Mammary epithelial cell (primary cell): ENCODE measurements at regions of chr17 and their contacts with region 1.

Region 1: GRCh38 chr17:50638851-50639767 is 4.4 kb downstream of the ABCC3 start:
- DNase-seq: peak; percentile 97
- H3K4me3 ChIP-seq: peak overlapping the region in 1 of 3 experiments; percentile 14
- H3K27ac ChIP-seq: peak overlapping the region; percentile 55
- H3K4me1 ChIP-seq: peaks cover 82% of the 10 kb centered on the region
- H3K27me3 ChIP-seq: no peaks in the 10 kb centered on the region
- CTCF ChIP-seq: no peak

Region 2: GRCh38 chr17:50541716-50542688 is 97.1 kb before region 1 on chr17:
- CTCF ChIA-PET with region 1: interaction called, 17 read pairs
- dilution Hi-C with region 1: no loop called
- in situ Hi-C with region 1: loop called in 1 of 2 experiments (anchors 5 kb)
- intact Hi-C with region 1: no loop called
- DNase-seq: peak; percentile 82
- H3K4me3 ChIP-seq: peak overlapping the region in 2 of 3 experiments; percentile 16 to 28
- H3K27ac ChIP-seq: no peak overlapping the region
- H3K4me1 ChIP-seq: peaks cover 60% of the 10 kb centered on the region
- H3K27me3 ChIP-seq: no peaks in the 10 kb centered on the region
- CTCF ChIP-seq: peak in 1 of 2 donors; percentile 12

Region 3: GRCh38 chr17:50649042-50649904 is 10.2 kb after region 1 on chr17:
- CTCF ChIA-PET with region 1: no interaction called
- dilution Hi-C with region 1: no loop called
- in situ Hi-C with region 1: no loop called
- intact Hi-C with region 1: no loop called
- DNase-seq: no peak
- H3K4me3 ChIP-seq: no peak overlapping the region
- H3K27ac ChIP-seq: no peak overlapping the region
- H3K4me1 ChIP-seq: no peaks in the 10 kb centered on the region
- H3K27me3 ChIP-seq: no peaks in the 10 kb centered on the region
- CTCF ChIP-seq: no peak

Region 4: GRCh38 chr17:50661795-50662391 is 22.8 kb after region 1 on chr17:
- CTCF ChIA-PET with region 1: interaction called, 21 read pairs
- dilution Hi-C with region 1: no loop called
- in situ Hi-C with region 1: no loop called
- intact Hi-C with region 1: loop called (anchors 2 kb)
- DNase-seq: peak; percentile 93
- H3K4me3 ChIP-seq: no peak overlapping the region
- H3K27ac ChIP-seq: peak overlapping the region; percentile 62
- H3K4me1 ChIP-seq: peaks cover 31% of the 10 kb centered on the region
- H3K27me3 ChIP-seq: no peaks in the 10 kb centered on the region
- CTCF ChIP-seq: no peak

Region 5: GRCh38 chr17:50689956-50690886 is 51.1 kb after region 1 on chr17:
- CTCF ChIA-PET with region 1: no interaction called
- dilution Hi-C with region 1: loop called (anchors 10 kb)
- in situ Hi-C with region 1: loop called in 1 of 2 experiments (anchors 10 kb)
- intact Hi-C with region 1: loop called (anchors 1 kb)
- DNase-seq: peak; percentile 66
- H3K4me3 ChIP-seq: no peak overlapping the region
- H3K27ac ChIP-seq: no peak overlapping the region
- H3K4me1 ChIP-seq: peaks cover 33% of the 10 kb centered on the region
- H3K27me3 ChIP-seq: no peaks in the 10 kb centered on the region
- CTCF ChIP-seq: no peak

Region 6: DNA sequence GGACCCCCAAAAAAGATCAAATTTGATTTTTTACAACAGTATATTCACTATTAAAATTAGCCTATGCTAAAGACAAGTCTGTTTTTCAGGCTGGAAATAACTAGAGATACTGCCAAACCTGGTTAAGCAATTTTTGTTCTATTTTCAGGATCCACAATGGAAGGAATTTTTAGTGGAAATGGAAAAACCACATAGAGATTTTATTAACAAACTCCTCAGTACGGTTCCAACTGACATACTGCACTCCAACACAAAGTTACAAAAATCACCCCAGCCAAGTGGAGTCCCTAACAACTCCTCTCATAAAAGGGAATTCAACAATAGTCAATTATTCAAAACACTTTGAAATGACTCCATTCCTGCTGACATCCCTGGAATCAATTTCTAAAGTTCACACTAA is 328.7 kb after region 1 on chr17:
- CTCF ChIA-PET with region 1: no interaction called
- dilution Hi-C with region 1: no loop called
- in situ Hi-C with region 1: no loop called
- intact Hi-C with region 1: no loop called
- DNase-seq: no peak
- H3K4me3 ChIP-seq: no peak overlapping the region
- H3K27ac ChIP-seq: no peak overlapping the region
- H3K4me1 ChIP-seq: no peaks in the 10 kb centered on the region
- H3K27me3 ChIP-seq: no peaks in the 10 kb centered on the region
- CTCF ChIP-seq: no peak